Left cardiac atrium (tissue), 4 donors: ENCODE measurements at regions of chr15 and their contacts with region 1.

Region 1: GRCh38 chr15:60326824-60327654 is 70.7 kb downstream of the ANXA2 start:
- DNase-seq: no peak
- ATAC-seq: no peak

Region 2: DNA sequence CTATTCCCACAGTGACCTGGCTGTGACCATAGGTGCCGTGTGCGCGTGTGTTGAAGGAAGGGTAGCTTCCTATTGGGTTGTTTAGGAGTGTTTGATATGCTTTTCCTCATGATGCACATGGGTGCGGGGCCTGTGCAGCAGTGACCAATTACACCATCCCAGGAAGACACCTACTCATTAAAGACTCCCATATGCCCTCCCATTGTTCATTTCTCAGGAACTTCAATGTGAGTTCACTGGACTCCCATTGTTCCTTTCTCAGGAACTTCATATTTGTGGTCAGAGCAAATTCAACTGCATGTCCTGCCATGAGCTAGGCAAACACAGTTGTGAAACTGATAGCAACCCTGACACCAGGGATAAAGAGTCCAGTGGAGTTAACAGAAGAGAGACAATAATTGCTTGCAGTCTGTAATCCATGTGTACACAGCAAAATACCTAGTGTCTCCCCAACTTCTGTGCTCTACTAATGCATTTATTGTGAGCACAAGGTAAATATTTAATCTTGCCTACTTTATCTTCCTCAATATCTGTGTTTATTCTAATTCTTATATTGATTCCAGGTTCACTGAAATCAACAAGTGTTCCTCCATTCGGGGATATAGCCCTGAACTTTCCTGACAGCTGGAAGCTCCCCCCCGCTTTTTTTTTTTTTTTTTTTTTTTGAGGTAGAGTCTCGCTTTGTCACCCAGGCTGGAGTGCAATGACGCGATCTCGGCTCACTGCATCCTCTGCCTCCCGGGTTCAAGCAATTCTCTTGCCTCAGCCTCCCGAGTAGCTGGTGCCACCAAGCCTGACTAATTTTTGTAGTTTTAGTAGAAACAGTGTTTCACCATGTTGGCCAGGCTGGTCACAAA is 772.9 kb before region 1 on chr15:
- intact Hi-C with region 1: no loop called
- DNase-seq: no peak
- ATAC-seq: no peak

Region 3: DNA sequence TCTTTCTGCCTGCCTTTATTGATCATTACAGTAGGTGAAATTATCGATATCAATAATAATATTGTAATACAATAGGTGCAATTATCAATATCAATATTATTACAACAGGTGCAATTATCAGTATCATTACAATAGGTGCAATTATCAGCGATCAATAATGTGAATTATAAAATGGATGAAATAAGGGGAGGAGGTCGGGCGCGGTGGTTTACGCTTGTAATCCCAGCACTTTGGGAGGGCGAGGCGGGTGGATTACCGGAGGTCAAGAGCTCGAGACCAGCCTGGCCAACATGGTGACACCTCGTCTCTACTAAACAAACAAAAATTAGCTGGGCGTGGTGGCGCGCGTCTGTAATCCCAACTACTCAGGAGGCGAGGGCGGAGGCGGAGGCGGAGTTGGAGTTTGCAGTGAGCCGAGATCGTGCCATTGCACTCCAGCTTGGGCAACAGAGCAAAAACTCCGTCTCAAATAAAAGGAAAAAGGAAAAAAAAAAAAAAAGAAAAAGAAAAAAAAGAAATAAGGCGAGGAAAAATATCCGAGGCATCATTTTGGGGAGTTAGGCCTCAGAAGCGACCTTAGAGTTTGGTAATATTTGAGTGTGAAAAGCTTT is 637.3 kb before region 1 on chr15:
- intact Hi-C with region 1: loop called in 1 of 2 experiments (anchors 5 kb)
- DNase-seq: peak; percentile 90
- ATAC-seq: peak; percentile 54 to 78

Region 4: DNA sequence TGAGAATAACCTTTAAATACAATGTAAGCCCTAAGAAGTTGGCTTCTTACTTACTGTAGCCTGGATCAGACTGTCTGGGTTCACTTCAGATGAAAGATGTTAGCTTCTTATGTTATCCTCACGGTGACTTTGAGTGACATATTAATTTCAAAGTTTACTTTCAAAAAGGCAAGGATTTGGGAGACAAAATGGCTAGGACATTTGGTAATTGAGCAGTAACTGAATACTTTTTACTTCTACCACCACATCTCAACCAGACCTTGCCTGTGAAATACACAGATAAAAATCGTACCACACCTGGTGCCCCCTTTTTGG is 601.9 kb before region 1 on chr15:
- intact Hi-C with region 1: loop called (anchors 5 to 10 kb)
- DNase-seq: no peak
- ATAC-seq: no peak

Region 5: GRCh38 chr15:59917504-59918157 is 409.4 kb before region 1 on chr15:
- intact Hi-C with region 1: loop called in 1 of 2 experiments (anchors 2 kb)
- DNase-seq: peak; percentile 49
- ATAC-seq: peak; percentile 67 to 85

Region 6: GRCh38 chr15:60006203-60006862 is 320.7 kb before region 1 on chr15:
- intact Hi-C with region 1: no loop called
- DNase-seq: no peak
- ATAC-seq: peak; percentile 48 to 70

Region 7: DNA sequence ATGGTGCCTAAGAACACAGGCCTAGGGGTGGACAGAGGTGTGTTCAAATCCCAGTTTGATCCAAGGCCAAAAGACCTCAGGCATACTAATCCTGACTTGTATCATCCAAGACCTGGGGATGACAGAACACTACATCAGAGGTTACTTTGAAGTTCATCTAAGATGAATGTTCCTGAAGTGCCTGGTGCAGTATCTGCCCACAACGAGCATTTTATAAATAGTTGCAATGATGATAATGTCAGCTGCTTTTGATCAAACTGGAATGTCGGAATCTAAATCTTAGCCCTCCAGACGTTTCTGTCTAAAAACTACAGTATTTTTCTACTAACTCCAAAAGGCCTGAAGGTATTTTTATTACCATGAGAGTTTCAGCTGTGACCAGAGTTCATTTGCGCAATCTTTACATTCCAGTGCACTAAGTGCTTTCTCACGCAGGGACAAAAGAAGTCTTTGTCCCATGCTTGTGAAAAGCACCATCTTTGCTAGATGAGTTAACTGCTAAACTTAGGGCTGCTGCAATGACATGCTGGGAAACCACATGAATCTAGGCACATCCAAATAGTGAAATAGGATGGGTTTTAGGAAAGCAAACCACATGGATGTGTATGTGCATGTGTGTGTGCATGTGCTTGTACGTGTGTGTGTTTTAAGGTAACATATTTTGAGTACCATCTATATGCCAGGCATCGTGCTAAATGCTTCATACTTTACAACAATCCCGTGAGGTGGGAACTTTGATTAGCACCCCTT is 52.7 kb after region 1 on chr15:
- intact Hi-C with region 1: no loop called
- DNase-seq: no peak
- ATAC-seq: peak; percentile 17 to 50

Region 8: GRCh38 chr15:60520825-60521368 is 193.9 kb after region 1 on chr15:
- intact Hi-C with region 1: no loop called
- DNase-seq: peak; percentile 70
- ATAC-seq: peak; percentile 34 to 67